Panc1 (cell line): ENCODE measurements at regions of chr2 and their contacts with region 1.

Region 1: GRCh38 chr2:96760036-96760985 is at the start of gene CNNM4:
- DNase-seq: no peak
- ATAC-seq: peak; percentile 90
- H3K4me3 ChIP-seq: peak within 1 kb of the TSS; percentile 70 to 71
- H3K27ac ChIP-seq: peak within 1 kb of the TSS; percentile 81
- H3K4me1 ChIP-seq: peaks cover 30% of the 10 kb centered on the region
- H3K27me3 ChIP-seq: no peaks in the 10 kb centered on the region
- CTCF ChIP-seq: no peak
- total RNA-seq, gene CNNM4: 15.7 TPM

Region 2: GRCh38 chr2:96618604-96619283 is 141.6 kb before region 1 on chr2:
- CTCF ChIA-PET with region 1: no interaction called
- POLR2A ChIA-PET with region 1: no interaction called
- in situ Hi-C with region 1: no loop called
- intact Hi-C with region 1: no loop called
- DNase-seq: no peak
- ATAC-seq: no peak
- H3K4me3 ChIP-seq: no peak overlapping the region
- H3K27ac ChIP-seq: no peak overlapping the region
- H3K4me1 ChIP-seq: no peaks in the 10 kb centered on the region
- H3K27me3 ChIP-seq: no peaks in the 10 kb centered on the region
- CTCF ChIP-seq: no peak

Region 3: GRCh38 chr2:96669665-96670091 is 90.6 kb before region 1 on chr2:
- CTCF ChIA-PET with region 1: no interaction called
- POLR2A ChIA-PET with region 1: interaction called, 19 read pairs
- in situ Hi-C with region 1: no loop called
- intact Hi-C with region 1: no loop called
- DNase-seq: no peak
- ATAC-seq: 0 out of 2 replicates have a peak, but pooled peaks have one; percentile 35
- H3K4me3 ChIP-seq: no peak overlapping the region
- H3K27ac ChIP-seq: no peak overlapping the region
- H3K4me1 ChIP-seq: no peaks in the 10 kb centered on the region
- H3K27me3 ChIP-seq: no peaks in the 10 kb centered on the region
- CTCF ChIP-seq: no peak

Region 4: DNA sequence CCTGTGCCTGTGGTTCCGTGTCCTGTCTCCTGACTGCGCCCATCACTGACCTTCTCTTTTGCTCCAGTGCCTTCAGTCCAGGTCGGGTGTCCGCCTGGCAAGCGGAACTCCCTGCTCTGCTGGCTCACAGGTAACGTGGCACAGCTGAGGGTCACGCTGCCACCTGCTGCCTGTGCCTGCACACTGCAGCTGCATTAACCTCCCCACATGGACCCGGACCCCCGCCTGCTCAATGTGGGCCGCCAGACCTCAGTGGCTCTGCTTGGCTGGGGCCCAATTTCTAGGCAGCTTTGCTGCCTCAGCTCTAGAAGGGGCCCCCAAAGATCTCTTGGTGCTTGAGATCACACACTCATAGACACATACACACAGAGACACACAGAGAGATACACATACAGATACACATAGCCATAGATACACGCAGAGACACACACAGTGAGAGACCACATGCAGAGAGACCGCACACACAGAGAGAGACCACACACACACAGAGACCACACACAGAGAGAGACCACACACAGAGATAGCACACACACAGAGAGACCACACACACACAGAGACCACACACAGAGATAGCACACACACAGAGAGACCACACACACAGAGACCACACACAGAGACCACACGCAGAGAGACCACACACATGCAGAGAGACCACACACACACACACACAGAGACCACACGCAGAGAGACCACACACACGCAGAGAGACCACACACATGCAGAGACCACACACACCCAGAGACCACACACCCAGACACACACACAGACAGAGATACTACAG is 40.9 kb after region 1 on chr2:
- CTCF ChIA-PET with region 1: interaction called, 5 read pairs
- POLR2A ChIA-PET with region 1: interaction called, 6 read pairs
- in situ Hi-C with region 1: no loop called
- intact Hi-C with region 1: loop called (anchors 5 kb)
- DNase-seq: no peak
- ATAC-seq: peak; percentile 95
- H3K4me3 ChIP-seq: no peak overlapping the region
- H3K27ac ChIP-seq: no peak overlapping the region
- H3K4me1 ChIP-seq: no peaks in the 10 kb centered on the region; the same call in 1 of the 2 replicates
- H3K27me3 ChIP-seq: no peaks in the 10 kb centered on the region
- CTCF ChIP-seq: peak; percentile 95